ENCODE measurements at regions of chr1 and their contacts with region 1.

Region 1: GRCh38 chr1:54944610-54945544 is 35.6 kb upstream of the TMEM61 start:
- DNase-seq: peak; percentile 10 to 79 (median 50)
- ATAC-seq: peak; percentile 53 to 72 (median 60)
- H3K4me3 ChIP-seq: no peak overlapping the region
- H3K4me3 Mint-ChIP-seq: no peak overlapping the region
- H3K27ac ChIP-seq: no peak overlapping the region
- H3K27ac Mint-ChIP-seq: no peak overlapping the region
- H3K4me1 ChIP-seq: peaks cover 2 to 7% of the 10 kb centered on the region in 2 experiments
- H3K4me1 Mint-ChIP-seq: peaks cover 12 to 13% (median 13%) of the 10 kb centered on the region in 3 donors
- H3K27me3 ChIP-seq: peaks cover 0 to 10% of the 10 kb centered on the region in 2 experiments
- H3K27me3 Mint-ChIP-seq: peaks cover 2 to 6% of the 10 kb centered on the region in 2 donors

Region 2: GRCh38 chr1:54872036-54872331 is 72.9 kb before region 1 on chr1:
- CTCF ChIA-PET with region 1: no interaction called
- POLR2A ChIA-PET with region 1: no interaction called
- DNase-seq: no peak
- ATAC-seq: no peak
- H3K4me3 ChIP-seq: no peak overlapping the region
- H3K4me3 Mint-ChIP-seq: no peak overlapping the region
- H3K27ac ChIP-seq: no peak overlapping the region
- H3K27ac Mint-ChIP-seq: no peak overlapping the region
- H3K4me1 ChIP-seq: no peaks in the 10 kb centered on the region
- H3K4me1 Mint-ChIP-seq: no peaks in the 10 kb centered on the region
- H3K27me3 ChIP-seq: no peaks in the 10 kb centered on the region
- H3K27me3 Mint-ChIP-seq: no peaks in the 10 kb centered on the region

Region 3: DNA sequence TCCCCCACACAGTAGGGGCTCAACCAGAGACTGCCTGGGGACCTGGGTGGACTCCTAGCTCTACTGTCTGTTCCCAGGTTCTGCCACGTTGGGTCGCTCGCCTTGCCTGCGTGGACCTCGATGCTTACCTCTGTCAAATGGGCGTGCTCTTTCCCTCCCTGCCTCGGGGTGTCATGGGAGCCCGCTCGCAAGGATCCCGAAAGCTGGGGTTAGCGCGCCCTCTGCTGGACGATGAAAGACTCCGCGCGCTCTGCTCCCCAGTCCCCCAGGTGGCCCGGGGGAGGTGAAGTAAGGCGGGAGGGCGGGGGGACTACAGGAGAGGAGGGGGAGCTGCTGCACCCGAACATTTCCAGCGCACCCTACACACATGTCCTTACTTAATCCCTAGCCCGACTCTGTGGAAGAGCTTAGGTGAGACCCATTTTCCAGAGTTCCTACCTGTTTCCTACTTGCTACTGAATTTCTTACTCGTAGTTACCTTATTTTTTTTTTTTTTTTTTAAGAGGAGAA is 51.5 kb after region 1 on chr1:
- CTCF ChIA-PET with region 1: interaction called, 5 to 38 read pairs
- POLR2A ChIA-PET with region 1: no interaction called
- DNase-seq: peak; percentile 45 to 87 (median 69)
- ATAC-seq: peak; percentile 76 to 88 (median 82)
- H3K4me3 ChIP-seq: peak overlapping the region in 1 of 2 donors; percentile 21
- H3K4me3 Mint-ChIP-seq: peak overlapping the region; percentile 49 to 71 (median 60)
- H3K27ac ChIP-seq: no peak overlapping the region
- H3K27ac Mint-ChIP-seq: peak overlapping the region; percentile 39 to 45
- H3K4me1 ChIP-seq: peaks cover 0 to 27% of the 10 kb centered on the region in 2 experiments
- H3K4me1 Mint-ChIP-seq: peaks cover 24 to 26% (median 25%) of the 10 kb centered on the region in 3 donors
- H3K27me3 ChIP-seq: peaks cover 7 to 62% of the 10 kb centered on the region in 2 experiments
- H3K27me3 Mint-ChIP-seq: peaks cover 29 to 44% of the 10 kb centered on the region in 2 donors

Region 4: DNA sequence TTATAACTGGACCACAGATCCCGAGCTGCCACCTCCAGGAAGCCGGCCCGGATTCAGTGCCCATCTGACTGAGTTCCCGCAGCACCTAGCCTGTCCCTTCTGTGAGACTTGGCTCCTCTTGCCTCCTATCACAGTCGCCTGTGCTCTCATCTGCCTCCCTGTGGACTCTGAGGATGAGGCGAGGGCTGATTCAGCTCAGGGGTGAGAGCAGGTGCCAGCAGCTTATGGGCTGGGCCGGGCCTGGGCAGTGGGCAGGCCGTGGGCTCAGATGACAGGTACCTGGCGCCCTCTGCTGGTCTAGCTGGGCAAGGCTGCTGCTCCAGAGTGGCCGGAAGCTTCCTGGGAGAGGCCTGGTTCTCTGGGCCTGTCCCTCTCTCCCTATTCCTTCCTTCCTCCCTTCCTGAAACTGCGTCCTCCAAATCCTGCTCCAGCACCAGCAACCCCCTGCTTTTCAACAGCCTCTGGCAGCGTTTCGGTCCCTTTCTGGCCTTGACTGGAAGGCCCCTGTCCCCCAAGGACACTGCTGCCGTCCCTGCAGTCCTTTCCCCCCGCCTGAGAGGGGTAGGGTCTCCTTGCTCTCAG is 77.2 kb after region 1 on chr1:
- CTCF ChIA-PET with region 1: interaction called, 3 to 25 read pairs
- POLR2A ChIA-PET with region 1: no interaction called
- DNase-seq: peak in 34 of 35 experiments; percentile 5 to 70 (median 46)
- ATAC-seq: peak; percentile 72 to 81 (median 75)
- H3K4me3 ChIP-seq: no peak overlapping the region
- H3K4me3 Mint-ChIP-seq: no peak overlapping the region
- H3K27ac ChIP-seq: no peak overlapping the region
- H3K27ac Mint-ChIP-seq: no peak overlapping the region
- H3K4me1 ChIP-seq: no peaks in the 10 kb centered on the region
- H3K4me1 Mint-ChIP-seq: peaks cover 0 to 2% (median 0%) of the 10 kb centered on the region in 3 donors
- H3K27me3 ChIP-seq: peaks cover 0 to 28% of the 10 kb centered on the region in 2 experiments
- H3K27me3 Mint-ChIP-seq: peaks cover 11 to 12% of the 10 kb centered on the region in 2 donors